Activated CD4-positive, alpha-beta memory T cell treated with anti-CD3 and anti-CD28 coated beads, Interleukin-2, amount 10 ng/mL, durations not matched to agents 7 days and 5 days (primary cell): ENCODE measurements at regions of chr14 and their contacts with region 1.

Region 1: DNA sequence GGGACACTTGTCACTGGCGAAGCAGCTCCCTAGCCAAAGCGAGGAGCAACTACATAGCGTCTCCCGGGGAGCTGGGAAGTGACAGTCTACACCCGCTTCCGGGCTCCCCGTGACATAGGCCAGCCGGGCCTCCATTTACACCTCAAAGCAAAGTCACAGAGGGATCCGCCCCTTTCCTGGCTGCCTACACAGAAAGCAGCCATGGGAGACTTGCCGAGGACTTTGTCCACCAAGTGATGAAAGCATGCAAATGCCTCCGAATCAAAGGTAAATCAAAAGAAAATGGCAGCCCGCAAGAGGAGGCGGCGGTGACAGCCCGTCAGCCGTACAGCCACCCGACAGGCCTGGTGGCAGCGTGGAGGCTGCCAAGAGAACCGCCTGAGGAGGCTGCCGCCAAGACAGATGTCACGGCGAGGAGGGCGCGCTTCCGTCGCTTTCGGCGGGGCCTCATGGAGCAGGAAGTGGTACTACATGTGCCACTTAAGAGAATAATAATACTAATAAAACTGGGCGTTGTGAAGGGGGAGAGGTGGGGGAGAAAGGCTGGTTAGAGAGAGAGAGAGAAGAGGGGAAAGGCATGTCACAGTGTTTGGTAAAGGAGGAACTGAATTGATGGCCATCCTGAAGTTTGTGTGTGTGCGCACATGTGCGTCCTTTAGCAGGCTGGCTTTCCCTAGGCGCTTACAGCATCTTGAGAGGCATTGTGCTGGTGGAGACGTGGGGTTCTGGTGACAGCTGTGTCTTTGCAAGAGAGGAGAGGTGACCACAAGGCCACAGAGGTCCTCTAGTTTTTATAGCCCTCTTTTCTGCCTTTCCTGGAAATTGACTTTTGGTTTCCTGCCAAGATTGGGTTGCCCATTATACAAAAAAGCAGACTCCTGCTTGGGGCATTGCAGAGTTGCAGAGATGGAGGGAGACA is 661.7 kb downstream of the VRK1 start:
- DNase-seq: peak; percentile 87
- H3K4me3 Mint-ChIP-seq: peak overlapping the region; percentile 89
- H3K27ac Mint-ChIP-seq: peak overlapping the region; percentile 98
- H3K4me1 Mint-ChIP-seq: peaks cover 52% of the 10 kb centered on the region
- H3K27me3 Mint-ChIP-seq: no peaks in the 10 kb centered on the region

Region 2: GRCh38 chr14:97077253-97077653 is 381.7 kb before region 1 on chr14:
- CTCF ChIA-PET with region 1: no interaction called
- POLR2A ChIA-PET with region 1: no interaction called
- DNase-seq: peak; percentile 23
- H3K4me3 Mint-ChIP-seq: no peak overlapping the region
- H3K27ac Mint-ChIP-seq: no peak overlapping the region
- H3K4me1 Mint-ChIP-seq: peaks cover 21% of the 10 kb centered on the region
- H3K27me3 Mint-ChIP-seq: no peaks in the 10 kb centered on the region

Region 3: GRCh38 chr14:97306760-97307246 is 152.1 kb before region 1 on chr14:
- CTCF ChIA-PET with region 1: interaction called, 9 read pairs
- POLR2A ChIA-PET with region 1: interaction called, 16 read pairs
- DNase-seq: no peak
- H3K4me3 Mint-ChIP-seq: no peak overlapping the region
- H3K27ac Mint-ChIP-seq: peak overlapping the region; percentile 77
- H3K4me1 Mint-ChIP-seq: peaks cover 51% of the 10 kb centered on the region
- H3K27me3 Mint-ChIP-seq: no peaks in the 10 kb centered on the region

Region 4: DNA sequence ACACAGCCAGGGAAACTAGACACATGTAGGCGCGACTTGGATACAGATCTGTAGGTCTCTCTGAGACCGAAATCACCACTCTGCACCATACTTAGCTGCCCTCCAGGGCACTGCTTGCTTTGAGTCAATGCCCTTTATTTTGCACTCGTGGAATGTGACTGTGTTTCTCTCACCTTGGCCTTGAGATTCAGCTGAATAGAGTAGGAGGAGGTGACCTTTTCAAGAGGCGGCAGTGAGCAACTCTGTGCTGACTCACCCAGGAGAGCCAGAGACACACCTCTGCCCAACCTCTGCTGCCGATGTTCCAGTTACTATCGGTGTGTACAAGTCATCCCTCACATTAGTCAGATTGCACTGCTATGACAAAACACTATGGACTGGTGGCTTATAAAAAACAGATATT is 78.4 kb before region 1 on chr14:
- CTCF ChIA-PET with region 1: interaction called, 3 read pairs
- POLR2A ChIA-PET with region 1: interaction called, 12 read pairs
- DNase-seq: peak; percentile 68
- H3K4me3 Mint-ChIP-seq: no peak overlapping the region
- H3K27ac Mint-ChIP-seq: peak overlapping the region; percentile 91
- H3K4me1 Mint-ChIP-seq: peaks cover 61% of the 10 kb centered on the region
- H3K27me3 Mint-ChIP-seq: no peaks in the 10 kb centered on the region

Region 5: GRCh38 chr14:97408937-97409815 is 49.7 kb before region 1 on chr14:
- CTCF ChIA-PET with region 1: interaction called, 3 read pairs
- POLR2A ChIA-PET with region 1: interaction called, 23 read pairs
- DNase-seq: peak; percentile 61
- H3K4me3 Mint-ChIP-seq: peak overlapping the region; percentile 58
- H3K27ac Mint-ChIP-seq: peak overlapping the region; percentile 92
- H3K4me1 Mint-ChIP-seq: peaks cover 32% of the 10 kb centered on the region
- H3K27me3 Mint-ChIP-seq: no peaks in the 10 kb centered on the region

Region 6: DNA sequence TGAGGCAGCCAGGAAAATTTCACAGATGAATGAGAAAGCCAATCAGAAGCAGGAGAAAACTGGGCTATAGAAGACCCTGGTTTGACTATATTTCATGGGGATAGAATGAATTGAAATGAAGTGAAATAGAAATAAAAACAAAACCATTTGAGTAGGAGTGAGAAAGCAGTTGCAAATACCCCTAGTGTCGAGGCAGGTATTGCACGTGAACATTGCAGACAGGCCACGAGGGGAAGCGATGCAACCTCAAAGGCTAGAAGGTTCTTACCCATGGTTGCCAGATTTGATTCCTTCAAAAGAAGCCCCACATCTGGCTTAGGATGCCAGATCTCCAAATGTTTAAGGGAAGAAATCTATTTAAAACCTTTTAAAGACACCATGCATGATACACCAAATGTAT is 12.8 kb before region 1 on chr14:
- CTCF ChIA-PET with region 1: interaction called, 12 read pairs
- POLR2A ChIA-PET with region 1: interaction called, 22 read pairs
- DNase-seq: no peak
- H3K4me3 Mint-ChIP-seq: no peak overlapping the region
- H3K27ac Mint-ChIP-seq: no peak overlapping the region
- H3K4me1 Mint-ChIP-seq: peaks cover 35% of the 10 kb centered on the region
- H3K27me3 Mint-ChIP-seq: no peaks in the 10 kb centered on the region

Region 7: DNA sequence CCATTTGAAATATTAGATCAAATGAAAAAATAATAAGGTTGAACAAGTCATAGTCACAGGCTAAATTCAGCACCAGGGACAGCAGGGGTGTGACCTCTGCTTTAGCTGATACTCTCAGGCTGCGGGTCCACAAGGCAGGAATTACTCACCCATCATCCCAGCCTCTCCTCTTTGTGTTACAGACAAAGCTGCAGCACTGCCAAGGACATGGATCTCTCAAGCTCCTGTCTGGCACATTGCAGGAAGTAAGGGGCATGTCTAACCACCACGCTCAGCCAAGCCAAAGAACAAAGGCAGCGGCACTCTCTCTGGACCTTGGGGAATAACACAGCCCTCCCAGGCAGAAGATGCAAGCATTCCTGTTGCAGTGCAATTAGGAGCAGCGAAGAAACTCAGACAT is 122.1 kb after region 1 on chr14:
- CTCF ChIA-PET with region 1: no interaction called
- POLR2A ChIA-PET with region 1: no interaction called
- DNase-seq: no peak
- H3K4me3 Mint-ChIP-seq: no peak overlapping the region
- H3K27ac Mint-ChIP-seq: no peak overlapping the region
- H3K4me1 Mint-ChIP-seq: no peaks in the 10 kb centered on the region
- H3K27me3 Mint-ChIP-seq: no peaks in the 10 kb centered on the region

Region 8: DNA sequence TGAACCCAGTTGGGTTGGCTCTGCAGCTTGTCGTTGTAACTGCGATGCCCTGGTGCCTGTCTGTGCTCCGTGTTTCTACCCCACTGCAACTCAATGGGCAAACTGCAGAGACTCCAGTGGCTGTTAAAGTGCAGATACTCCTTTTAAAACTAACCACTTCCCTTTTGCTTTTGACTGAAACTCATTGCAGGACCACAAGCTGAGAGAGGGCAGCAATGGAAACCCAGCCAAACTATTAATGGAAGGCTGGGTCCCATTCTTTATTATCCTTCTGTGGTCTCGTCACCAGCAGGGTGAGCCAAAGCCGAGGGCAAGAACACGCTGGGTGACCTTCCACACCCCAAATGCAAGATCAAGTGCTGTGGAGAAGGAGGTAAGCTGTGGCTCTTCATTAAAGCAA is 248.7 kb after region 1 on chr14:
- CTCF ChIA-PET with region 1: no interaction called
- POLR2A ChIA-PET with region 1: interaction called, 12 read pairs
- DNase-seq: peak; percentile 65
- H3K4me3 Mint-ChIP-seq: peak overlapping the region; percentile 26
- H3K27ac Mint-ChIP-seq: peak overlapping the region; percentile 96
- H3K4me1 Mint-ChIP-seq: peaks cover 90% of the 10 kb centered on the region
- H3K27me3 Mint-ChIP-seq: no peaks in the 10 kb centered on the region